Activated naive CD4-positive, alpha-beta T cell treated with anti-CD3 and anti-CD28 coated beads for 36 hours (primary cell): ENCODE measurements at regions of chr1 and their contacts with region 1.

Region 1: DNA sequence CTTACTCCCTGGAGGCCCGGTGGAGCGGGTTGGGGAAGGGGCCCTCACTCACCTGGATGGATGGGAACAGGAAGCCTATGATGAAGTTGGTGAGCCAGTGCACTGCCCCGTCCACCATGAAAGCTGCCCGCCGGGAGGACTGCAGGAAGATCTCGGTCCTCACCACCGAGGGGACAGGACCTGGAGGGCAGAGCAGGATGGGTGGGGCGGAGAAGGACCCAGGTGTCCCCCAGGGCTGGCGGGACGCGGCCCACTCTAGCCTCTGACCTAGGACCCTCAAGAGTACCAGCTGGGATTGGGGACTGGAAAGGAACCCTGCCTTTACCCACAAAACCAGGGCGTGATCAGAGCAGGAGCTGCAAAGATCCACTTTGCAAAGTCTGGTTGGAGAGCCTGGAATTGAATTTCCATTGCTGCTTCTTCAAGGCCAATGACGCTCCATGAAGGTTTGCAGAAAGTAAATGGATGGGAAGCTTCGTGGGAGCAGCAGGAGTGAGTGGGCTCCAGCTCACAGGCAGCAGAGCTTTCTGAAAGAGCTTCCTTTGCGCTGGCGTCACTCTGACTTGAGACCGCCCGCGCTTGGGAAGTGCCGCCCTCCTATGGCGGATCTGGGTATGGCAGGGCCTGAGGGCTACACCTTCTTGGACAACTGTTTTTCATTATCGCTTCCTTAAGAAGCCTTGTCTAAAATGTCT is 21.4 kb downstream of the SLC2A7 start:
- DNase-seq: peak; percentile 94
- H3K4me3 Mint-ChIP-seq: peak overlapping the region; percentile 24
- H3K27ac Mint-ChIP-seq: no peak overlapping the region
- H3K4me1 Mint-ChIP-seq: peaks cover 8% of the 10 kb centered on the region
- H3K27me3 Mint-ChIP-seq: no peaks in the 10 kb centered on the region

Region 2: GRCh38 chr1:8560611-8561544 is 444.0 kb before region 1 on chr1:
- CTCF ChIA-PET with region 1: no interaction called
- intact Hi-C with region 1: loop called (anchors 10 kb)
- DNase-seq: peak; percentile 53
- H3K4me3 Mint-ChIP-seq: no peak overlapping the region
- H3K27ac Mint-ChIP-seq: no peak overlapping the region
- H3K4me1 Mint-ChIP-seq: peaks cover 26% of the 10 kb centered on the region
- H3K27me3 Mint-ChIP-seq: no peaks in the 10 kb centered on the region

Region 3: GRCh38 chr1:8858888-8859706 is 145.8 kb before region 1 on chr1:
- CTCF ChIA-PET with region 1: interaction called, 10 read pairs
- intact Hi-C with region 1: loop called (anchors 1 kb)
- DNase-seq: peak; percentile 78
- H3K4me3 Mint-ChIP-seq: no peak overlapping the region
- H3K27ac Mint-ChIP-seq: peak overlapping the region; percentile 83
- H3K4me1 Mint-ChIP-seq: peaks cover 25% of the 10 kb centered on the region
- H3K27me3 Mint-ChIP-seq: no peaks in the 10 kb centered on the region

Region 4: DNA sequence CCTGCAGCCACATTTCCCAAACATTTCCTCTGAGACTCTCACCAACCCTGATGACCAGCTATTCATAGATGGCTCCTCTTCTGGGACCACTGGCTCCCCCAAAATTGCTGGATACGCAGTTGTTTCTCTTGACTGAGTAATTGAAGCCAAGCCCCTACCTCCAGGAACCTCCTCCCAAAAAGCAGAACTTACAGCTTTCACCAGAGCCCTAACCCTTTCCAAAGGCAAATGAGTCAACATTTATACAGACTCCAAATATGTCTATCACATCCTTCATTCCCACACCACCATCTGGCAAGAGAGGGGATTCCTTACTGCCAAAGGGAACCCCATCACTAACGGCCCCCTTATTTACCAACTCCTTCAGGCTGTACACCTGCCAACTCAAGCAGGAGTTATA is 79.4 kb before region 1 on chr1:
- CTCF ChIA-PET with region 1: interaction called, 117 read pairs
- intact Hi-C with region 1: no loop called
- DNase-seq: no peak
- H3K4me3 Mint-ChIP-seq: no peak overlapping the region
- H3K27ac Mint-ChIP-seq: no peak overlapping the region
- H3K4me1 Mint-ChIP-seq: peaks cover 31% of the 10 kb centered on the region
- H3K27me3 Mint-ChIP-seq: no peaks in the 10 kb centered on the region

Region 5: GRCh38 chr1:8987881-8988617 is 16.8 kb before region 1 on chr1:
- CTCF ChIA-PET with region 1: interaction called, 67 read pairs
- intact Hi-C with region 1: no loop called
- DNase-seq: peak; percentile 85
- H3K4me3 Mint-ChIP-seq: peak overlapping the region; percentile 41
- H3K27ac Mint-ChIP-seq: peak overlapping the region; percentile 84
- H3K4me1 Mint-ChIP-seq: peaks cover 43% of the 10 kb centered on the region
- H3K27me3 Mint-ChIP-seq: no peaks in the 10 kb centered on the region

Region 6: GRCh38 chr1:9196129-9197040 is 191.5 kb after region 1 on chr1:
- CTCF ChIA-PET with region 1: interaction called, 6 read pairs
- intact Hi-C with region 1: loop called (anchors 5 kb)
- DNase-seq: peak; percentile 79
- H3K4me3 Mint-ChIP-seq: no peak overlapping the region
- H3K27ac Mint-ChIP-seq: no peak overlapping the region
- H3K4me1 Mint-ChIP-seq: peaks cover 12% of the 10 kb centered on the region
- H3K27me3 Mint-ChIP-seq: peaks cover 39% of the 10 kb centered on the region

Region 7: DNA sequence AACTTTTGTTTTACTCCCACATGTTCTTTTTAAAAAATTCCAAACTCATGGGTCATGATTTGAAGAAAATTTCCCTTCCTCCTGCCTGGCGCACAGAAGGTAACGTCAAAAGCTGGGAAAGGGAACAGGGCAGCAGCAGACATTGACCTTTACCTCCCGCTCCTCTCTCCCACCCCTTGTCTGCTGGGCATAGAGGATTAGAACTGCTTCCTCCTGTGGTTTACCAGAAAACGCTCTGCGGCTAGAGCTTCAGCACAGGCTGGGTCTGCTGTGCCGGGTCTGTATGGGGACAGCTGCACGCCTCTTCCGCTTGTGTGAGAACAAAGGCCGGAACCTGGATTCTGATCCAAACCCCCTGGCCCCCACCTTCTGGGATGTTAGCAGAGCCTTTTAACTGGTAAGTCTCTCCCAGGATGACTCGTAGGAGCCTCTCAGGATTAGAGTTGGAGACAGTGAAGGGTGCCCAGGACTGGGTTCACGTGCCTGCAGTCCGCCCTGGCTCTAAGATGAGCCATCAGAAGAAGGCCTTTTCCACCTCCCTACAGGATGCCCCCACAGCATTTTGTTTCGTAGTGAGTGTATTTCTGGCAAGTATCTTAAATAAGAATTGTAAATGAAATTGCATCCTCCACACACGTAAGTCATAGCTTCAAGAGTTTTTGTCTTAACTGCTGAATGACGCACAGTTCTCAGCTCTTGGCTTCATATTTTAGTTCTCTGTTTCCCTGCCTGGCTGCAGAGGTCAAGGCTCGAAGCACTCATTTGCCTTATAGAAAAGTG is 235.0 kb after region 1 on chr1:
- CTCF ChIA-PET with region 1: no interaction called
- intact Hi-C with region 1: no loop called
- DNase-seq: peak; percentile 73
- H3K4me3 Mint-ChIP-seq: peak overlapping the region; percentile 43
- H3K27ac Mint-ChIP-seq: peak overlapping the region; percentile 66
- H3K4me1 Mint-ChIP-seq: peaks cover 48% of the 10 kb centered on the region
- H3K27me3 Mint-ChIP-seq: no peaks in the 10 kb centered on the region